ENCODE measurements at regions of chr2 and their contacts with region 1.

Region 1: GRCh38 chr2:64330281-64331113 is 123.5 kb upstream of the LGALSL start:
- DNase-seq: peak; percentile 6
- H3K4me3 ChIP-seq: peak overlapping the region in 2 of 4 donors; percentile 24 to 50
- H3K27ac ChIP-seq: peak overlapping the region; percentile 41 to 80 (median 74)
- H3K4me1 ChIP-seq: peaks cover 15 to 62% (median 26%) of the 10 kb centered on the region in 3 donors
- H3K27me3 ChIP-seq: no peaks in the 10 kb centered on the region
- CTCF ChIP-seq: peak; percentile 76 to 97 (median 94)
- POLR2A ChIP-seq: no peak

Region 2: DNA sequence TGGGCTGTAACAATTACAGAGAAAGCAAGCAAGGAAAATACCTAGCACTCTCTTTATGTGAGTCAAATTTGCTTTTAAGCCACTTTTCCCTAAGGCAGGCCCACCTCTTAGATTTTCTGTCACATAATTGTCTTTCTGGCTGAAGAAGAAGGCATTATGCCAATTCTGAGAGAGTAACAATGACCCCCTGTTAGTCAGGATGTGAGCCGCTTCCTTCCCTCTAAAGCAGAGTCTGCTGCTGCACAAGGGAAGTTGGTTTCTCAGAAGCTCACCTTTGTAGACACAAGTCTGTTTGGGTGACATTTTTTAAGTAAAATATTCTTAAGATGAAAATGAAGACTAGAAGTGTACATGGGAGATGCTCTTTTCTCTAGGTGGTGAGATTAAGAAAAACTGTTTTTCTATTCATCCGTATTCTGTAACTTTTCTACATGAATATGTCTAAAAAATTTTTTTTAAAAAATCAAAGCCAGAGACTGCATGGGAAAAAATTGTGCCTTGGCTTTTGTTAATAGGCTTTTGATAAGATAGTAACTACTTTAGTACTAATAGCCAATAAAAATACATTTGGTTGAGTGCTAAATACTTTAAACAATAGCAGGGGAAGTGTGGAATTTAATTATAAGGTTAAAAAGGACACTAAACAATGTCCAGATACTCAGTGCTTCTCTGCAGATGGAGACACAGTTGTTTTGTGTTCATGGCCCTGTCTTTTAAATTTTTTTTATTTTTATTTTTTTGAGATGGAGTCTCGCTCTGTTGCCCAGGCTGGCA is 277.8 kb before region 1 on chr2:
- intact Hi-C with region 1: loop called (anchors 10 kb)
- DNase-seq: no peak
- H3K4me3 ChIP-seq: no peak overlapping the region
- H3K27ac ChIP-seq: peak overlapping the region in 2 of 4 donors; percentile 30 to 51
- H3K4me1 ChIP-seq: peaks cover 0 to 15% (median 3%) of the 10 kb centered on the region in 3 donors
- H3K27me3 ChIP-seq: no peaks in the 10 kb centered on the region
- CTCF ChIP-seq: no peak
- POLR2A ChIP-seq: no peak

Region 3: GRCh38 chr2:64144057-64145013 is 186.2 kb before region 1 on chr2 and contains the start of gene PELI1:
- intact Hi-C with region 1: loop called (anchors 10 kb)
- DNase-seq: peak; percentile 83
- H3K4me3 ChIP-seq: peak within 1 kb of the TSS; percentile 90 to 98 (median 97)
- H3K27ac ChIP-seq: peak within 1 kb of the TSS; percentile 99 to 100 (median 99)
- H3K4me1 ChIP-seq: peaks cover 0 to 40% (median 5%) of the 10 kb centered on the region in 3 donors
- H3K27me3 ChIP-seq: no peaks in the 10 kb centered on the region
- CTCF ChIP-seq: peak in 2 of 6 experiments; percentile 15 to 19
- POLR2A ChIP-seq: peak; percentile 34 to 100 (median 96)
- total RNA-seq, gene PELI1: 23.7 to 40.4 (median 34.5) TPM

Region 4: DNA sequence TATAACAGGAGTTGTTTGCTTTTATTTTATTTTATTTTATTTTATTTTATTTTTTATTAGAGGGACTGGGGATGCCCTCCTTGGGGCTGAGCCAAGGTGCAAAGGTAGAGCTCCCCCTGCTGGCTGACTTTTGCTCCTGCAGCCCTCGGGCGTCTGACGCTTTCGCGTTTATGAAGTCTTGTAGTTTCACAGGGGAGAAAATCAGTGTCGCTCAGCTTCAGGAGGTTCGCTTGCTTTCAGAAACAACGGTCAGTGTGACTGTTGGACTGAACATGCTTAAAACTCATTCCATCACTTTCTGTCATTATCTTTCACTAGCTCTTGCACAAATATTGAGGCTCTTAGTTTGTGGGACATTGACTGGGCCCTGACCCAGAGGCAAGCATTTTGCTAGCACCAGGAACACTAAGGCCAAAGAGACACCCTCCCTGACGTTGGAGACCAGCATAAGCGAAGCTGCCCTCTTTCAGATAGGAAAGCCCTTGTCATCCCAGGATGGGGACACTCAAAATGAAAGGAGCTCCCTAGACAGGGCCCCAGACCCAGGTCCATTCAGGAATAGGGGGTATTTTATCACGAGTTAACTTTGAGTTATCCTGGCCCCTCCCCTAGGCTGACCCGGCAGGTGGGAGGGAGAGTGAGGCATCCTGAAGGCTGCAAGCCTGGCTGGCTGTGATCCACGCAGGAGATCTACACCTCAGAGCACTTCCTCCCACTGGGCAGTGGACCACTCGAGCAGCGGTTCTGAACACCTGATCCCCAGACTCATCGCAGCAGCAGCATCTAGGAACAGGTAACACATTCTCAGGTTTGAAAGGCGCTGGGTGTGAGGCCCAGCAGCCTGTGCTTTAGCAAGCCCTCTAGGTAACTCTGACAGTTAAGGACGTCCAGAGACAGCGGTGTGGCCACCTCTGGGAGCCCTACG is 157.8 kb after region 1 on chr2:
- intact Hi-C with region 1: loop called (anchors 5 kb)
- DNase-seq: no peak
- H3K4me3 ChIP-seq: no peak overlapping the region
- H3K27ac ChIP-seq: no peak overlapping the region
- H3K4me1 ChIP-seq: peaks cover 5 to 42% (median 17%) of the 10 kb centered on the region in 3 donors
- H3K27me3 ChIP-seq: no peaks in the 10 kb centered on the region
- CTCF ChIP-seq: peak; percentile 88 to 98 (median 96)
- POLR2A ChIP-seq: no peak